Caco-2 (cell line): ENCODE measurements at regions of chr16 and their contacts with region 1.

Region 1: DNA sequence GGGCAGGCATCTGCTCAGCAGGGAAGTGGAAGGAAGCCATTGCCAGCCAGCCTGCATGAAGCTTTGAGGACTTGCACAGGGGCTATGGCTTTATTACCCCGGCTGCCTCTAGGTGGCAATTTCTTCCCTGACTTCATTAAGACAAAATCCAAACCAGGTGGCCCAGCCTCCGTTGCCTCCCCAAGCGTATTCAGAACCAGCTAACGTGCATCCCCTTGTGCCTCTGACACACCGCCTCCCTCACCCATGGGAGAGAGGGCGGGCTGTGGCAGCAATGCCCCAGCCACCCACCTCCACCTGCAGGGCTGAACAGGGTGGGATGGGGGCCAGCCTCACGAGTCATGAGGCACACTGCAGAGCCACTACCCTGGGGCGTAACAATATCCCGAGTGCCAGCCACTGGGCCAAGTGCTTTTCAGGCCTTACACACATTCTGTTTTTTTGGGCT is 6.8 kb downstream of the KIFC3 start:
- DNase-seq: peak; percentile 76 to 82
- H3K4me3 ChIP-seq: no peak overlapping the region
- H3K4me3 Mint-ChIP-seq: peak overlapping the region; percentile 9
- H3K27ac Mint-ChIP-seq: peak overlapping the region; percentile 69
- H3K4me1 ChIP-seq: peaks cover 46% of the 10 kb centered on the region
- H3K4me1 Mint-ChIP-seq: peaks cover 40% of the 10 kb centered on the region
- H3K27me3 ChIP-seq: no peaks in the 10 kb centered on the region
- H3K27me3 Mint-ChIP-seq: no peaks in the 10 kb centered on the region
- CTCF ChIP-seq: peak; percentile 75

Region 2: GRCh38 chr16:57816334-57816745 is 20.9 kb after region 1 on chr16:
- CTCF ChIA-PET with region 1: interaction called, 10 read pairs
- POLR2A ChIA-PET with region 1: interaction called, 4 read pairs
- intact Hi-C with region 1: loop called (anchors 1 kb)
- DNase-seq: peak; percentile 94 to 96
- H3K4me3 ChIP-seq: no peak overlapping the region
- H3K4me3 Mint-ChIP-seq: peak overlapping the region; percentile 66
- H3K27ac Mint-ChIP-seq: peak overlapping the region; percentile 98
- H3K4me1 ChIP-seq: peaks cover 83% of the 10 kb centered on the region
- H3K4me1 Mint-ChIP-seq: peaks cover 69% of the 10 kb centered on the region
- H3K27me3 ChIP-seq: no peaks in the 10 kb centered on the region
- H3K27me3 Mint-ChIP-seq: no peaks in the 10 kb centered on the region
- CTCF ChIP-seq: no peak

Region 3: GRCh38 chr16:57826706-57827625 is 31.5 kb after region 1 on chr16:
- CTCF ChIA-PET with region 1: interaction called, 4 read pairs
- POLR2A ChIA-PET with region 1: interaction called, 4 read pairs
- intact Hi-C with region 1: loop called (anchors 1 kb)
- DNase-seq: peak; percentile 69 to 78
- H3K4me3 ChIP-seq: no peak overlapping the region
- H3K4me3 Mint-ChIP-seq: no peak overlapping the region
- H3K27ac Mint-ChIP-seq: peak overlapping the region; percentile 86
- H3K4me1 ChIP-seq: peaks cover 67% of the 10 kb centered on the region
- H3K4me1 Mint-ChIP-seq: peaks cover 52% of the 10 kb centered on the region
- H3K27me3 ChIP-seq: no peaks in the 10 kb centered on the region
- H3K27me3 Mint-ChIP-seq: no peaks in the 10 kb centered on the region
- CTCF ChIP-seq: no peak

Region 4: GRCh38 chr16:57984331-57985203 is 189.1 kb after region 1 on chr16:
- CTCF ChIA-PET with region 1: no interaction called
- POLR2A ChIA-PET with region 1: no interaction called
- intact Hi-C with region 1: loop called (anchors 5 kb)
- DNase-seq: peak in 1 of 2 experiments; percentile 42
- H3K4me3 ChIP-seq: no peak overlapping the region
- H3K4me3 Mint-ChIP-seq: no peak overlapping the region
- H3K27ac Mint-ChIP-seq: no peak overlapping the region
- H3K4me1 ChIP-seq: peaks cover 22% of the 10 kb centered on the region
- H3K4me1 Mint-ChIP-seq: peaks cover 10% of the 10 kb centered on the region
- H3K27me3 ChIP-seq: no peaks in the 10 kb centered on the region
- H3K27me3 Mint-ChIP-seq: no peaks in the 10 kb centered on the region
- CTCF ChIP-seq: no peak

Region 5: DNA sequence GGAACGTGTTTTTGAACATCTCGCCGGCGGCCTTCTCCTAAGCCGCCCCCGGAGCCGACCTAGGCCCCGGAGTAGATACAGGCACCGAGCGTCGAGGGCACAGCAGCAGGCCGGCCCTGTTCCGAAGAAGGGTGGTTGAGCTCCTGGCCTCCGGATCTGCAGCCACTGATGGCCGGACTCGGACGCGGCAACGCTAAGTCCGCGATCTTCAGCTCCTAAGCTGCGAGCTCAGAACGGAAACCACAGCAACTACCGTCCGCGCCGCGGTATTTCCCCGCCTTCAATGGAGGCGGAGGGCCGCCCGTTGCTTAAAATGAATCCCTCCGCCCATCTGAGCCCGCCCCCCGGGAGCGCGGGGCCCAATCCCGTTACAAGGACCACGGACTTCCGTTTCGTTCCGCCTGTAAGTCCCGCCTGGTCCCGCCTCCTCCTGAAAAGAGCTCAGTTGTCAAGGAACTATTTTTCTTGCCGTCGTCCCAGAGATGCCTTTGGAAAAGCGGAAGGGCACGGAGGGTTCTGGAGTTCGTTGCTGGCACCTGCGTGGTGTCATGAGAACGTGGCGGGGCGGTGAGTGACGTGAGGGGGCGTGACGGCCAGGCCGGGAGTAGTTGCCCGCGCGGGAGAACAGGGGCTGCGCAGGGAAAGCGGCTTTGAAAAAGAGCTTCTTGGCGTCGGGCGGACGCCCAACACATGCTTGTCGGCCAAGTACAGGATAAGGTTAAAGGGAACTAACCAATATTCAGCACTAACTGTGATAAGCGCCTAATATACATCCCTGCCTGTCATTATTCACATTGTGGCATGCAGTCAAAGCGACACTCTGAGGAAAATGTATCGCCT is 333.9 kb after region 1 on chr16 and contains the start of gene CFAP20:
- CTCF ChIA-PET with region 1: interaction called, 4 read pairs
- POLR2A ChIA-PET with region 1: no interaction called
- intact Hi-C with region 1: loop called (anchors 5 kb)
- DNase-seq: peak; percentile 100
- H3K4me3 ChIP-seq: peak within 1 kb of the TSS; percentile 92
- H3K4me3 Mint-ChIP-seq: peak within 1 kb of the TSS; percentile 68
- H3K27ac Mint-ChIP-seq: peak within 1 kb of the TSS; percentile 49
- H3K4me1 ChIP-seq: peaks cover 21% of the 10 kb centered on the region
- H3K4me1 Mint-ChIP-seq: peaks cover 21% of the 10 kb centered on the region
- H3K27me3 ChIP-seq: no peaks in the 10 kb centered on the region
- H3K27me3 Mint-ChIP-seq: no peaks in the 10 kb centered on the region
- CTCF ChIP-seq: no peak
- total RNA-seq, gene CFAP20: 69.4 and 73.2 TPM in 2 replicates